AG04450 (cell line): ENCODE measurements at regions of chr21 and their contacts with region 1.

Region 1: GRCh38 chr21:33924079-33924765 is 8.6 kb upstream of the ATP5PO start:
- DNase-seq: peak; percentile 45
- H3K4me3 ChIP-seq: no peak overlapping the region
- H3K27ac ChIP-seq: no peak overlapping the region
- H3K27me3 ChIP-seq: no peaks in the 10 kb centered on the region
- CTCF ChIP-seq: peak; percentile 93

Region 2: GRCh38 chr21:33703750-33704606 is 220.2 kb before region 1 on chr21:
- CTCF ChIA-PET with region 1: no interaction called
- POLR2A ChIA-PET with region 1: no interaction called
- DNase-seq: no peak
- H3K4me3 ChIP-seq: no peak overlapping the region
- H3K27ac ChIP-seq: no peak overlapping the region
- H3K27me3 ChIP-seq: no peaks in the 10 kb centered on the region
- CTCF ChIP-seq: no peak

Region 3: DNA sequence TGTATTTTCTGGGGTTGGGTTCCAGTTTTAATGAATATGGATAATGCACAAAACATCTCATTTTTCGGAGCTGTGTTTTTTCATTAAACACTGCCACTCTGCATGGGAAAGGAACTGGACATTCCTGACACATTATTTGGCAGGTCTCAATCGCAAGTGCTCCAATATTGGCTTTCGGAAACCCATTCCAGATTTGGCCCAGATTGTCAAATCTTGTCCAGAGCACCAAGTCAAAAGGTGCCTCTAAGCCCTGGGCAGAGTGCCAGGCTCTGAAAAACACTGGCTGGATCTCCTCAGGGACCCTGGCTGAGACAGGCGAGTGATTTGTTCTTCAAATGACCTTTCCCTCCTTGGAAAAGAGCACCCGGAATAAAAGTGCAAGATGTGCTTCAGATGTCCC is 80.8 kb after region 1 on chr21:
- CTCF ChIA-PET with region 1: no interaction called
- POLR2A ChIA-PET with region 1: no interaction called
- DNase-seq: no peak
- H3K4me3 ChIP-seq: no peak overlapping the region
- H3K27ac ChIP-seq: no peak overlapping the region
- H3K27me3 ChIP-seq: no peaks in the 10 kb centered on the region
- CTCF ChIP-seq: no peak

Region 4: GRCh38 chr21:34073870-34074781 is 149.9 kb after region 1 on chr21:
- CTCF ChIA-PET with region 1: interaction called, 18 read pairs
- POLR2A ChIA-PET with region 1: interaction called, 4 read pairs
- DNase-seq: no peak
- H3K4me3 ChIP-seq: peak overlapping the region; percentile 86
- H3K27ac ChIP-seq: no peak overlapping the region
- H3K27me3 ChIP-seq: no peaks in the 10 kb centered on the region
- CTCF ChIP-seq: no peak

Region 5: GRCh38 chr21:34202553-34203372 is 278.5 kb after region 1 on chr21:
- CTCF ChIA-PET with region 1: interaction called, 46 read pairs
- POLR2A ChIA-PET with region 1: interaction called, 5 read pairs
- DNase-seq: no peak
- H3K4me3 ChIP-seq: no peak overlapping the region
- H3K27ac ChIP-seq: no peak overlapping the region
- H3K27me3 ChIP-seq: no peaks in the 10 kb centered on the region
- CTCF ChIP-seq: no peak

Region 6: GRCh38 chr21:34345091-34345871 is 421.1 kb after region 1 on chr21:
- CTCF ChIA-PET with region 1: interaction called, 102 read pairs
- POLR2A ChIA-PET with region 1: no interaction called
- DNase-seq: no peak
- H3K4me3 ChIP-seq: no peak overlapping the region
- H3K27ac ChIP-seq: peak overlapping the region; percentile 68
- H3K27me3 ChIP-seq: no peaks in the 10 kb centered on the region
- CTCF ChIP-seq: no peak

Region 7: DNA sequence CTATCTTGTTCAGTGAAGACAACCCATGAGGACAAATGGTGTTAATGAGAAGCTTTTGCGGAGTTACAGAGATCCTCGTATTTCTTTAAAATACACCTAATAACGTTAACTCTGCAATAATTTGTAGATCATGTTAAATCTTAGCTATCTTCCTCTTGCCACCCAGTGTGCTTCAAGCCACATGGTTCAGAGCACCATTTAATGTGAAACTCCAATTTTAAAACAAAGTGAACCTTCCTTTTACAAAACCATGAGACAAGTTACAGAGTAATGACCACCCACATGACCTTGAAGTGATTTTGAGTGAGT is 437.9 kb after region 1 on chr21:
- CTCF ChIA-PET with region 1: interaction called, 24 read pairs
- POLR2A ChIA-PET with region 1: interaction called, 4 read pairs
- DNase-seq: no peak
- H3K4me3 ChIP-seq: no peak overlapping the region
- H3K27ac ChIP-seq: no peak overlapping the region
- H3K27me3 ChIP-seq: peaks cover 3% of the 10 kb centered on the region
- CTCF ChIP-seq: no peak